CD8-positive, alpha-beta memory T cell (primary cell): ENCODE measurements at regions of chr3 and their contacts with region 1.

Region 1: DNA sequence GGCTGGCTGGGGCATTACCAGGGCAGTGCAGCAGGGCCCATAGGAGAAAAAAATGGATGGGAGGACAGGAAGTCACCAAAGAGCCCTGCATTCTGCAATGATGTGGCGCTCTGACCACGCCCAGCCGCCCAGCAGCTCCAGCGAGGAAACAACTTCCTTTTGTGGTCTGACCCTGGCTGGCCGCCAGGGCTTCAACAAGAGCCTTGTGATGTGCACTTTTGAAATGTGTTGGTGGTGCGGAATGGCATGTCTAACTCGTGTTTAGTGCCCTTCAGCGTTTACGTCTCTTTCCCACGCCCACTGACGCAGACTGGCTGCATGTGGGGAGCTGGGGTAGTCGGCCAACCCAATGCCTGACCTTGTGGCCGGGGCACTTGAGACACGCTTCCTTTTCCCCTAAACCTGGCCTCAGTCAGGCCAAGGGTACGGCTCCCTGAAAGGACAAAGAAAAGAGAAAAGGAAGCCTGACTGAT is 81.9 kb upstream of the CTNNB1 start:
- DNase-seq: peak; percentile 62 to 91 (median 84)
- H3K4me3 ChIP-seq: peak overlapping the region; percentile 48
- H3K4me3 Mint-ChIP-seq: peak overlapping the region; percentile 35 to 76 (median 70)
- H3K27ac ChIP-seq: peak overlapping the region; percentile 40
- H3K27ac Mint-ChIP-seq: peak overlapping the region; percentile 74 to 97 (median 92)
- H3K4me1 ChIP-seq: peaks cover 24% of the 10 kb centered on the region
- H3K4me1 Mint-ChIP-seq: peaks cover 25 to 30% (median 29%) of the 10 kb centered on the region in 3 donors
- H3K27me3 ChIP-seq: no peaks in the 10 kb centered on the region
- H3K27me3 Mint-ChIP-seq: peaks cover 0 to 3% of the 10 kb centered on the region in 2 donors

Region 2: DNA sequence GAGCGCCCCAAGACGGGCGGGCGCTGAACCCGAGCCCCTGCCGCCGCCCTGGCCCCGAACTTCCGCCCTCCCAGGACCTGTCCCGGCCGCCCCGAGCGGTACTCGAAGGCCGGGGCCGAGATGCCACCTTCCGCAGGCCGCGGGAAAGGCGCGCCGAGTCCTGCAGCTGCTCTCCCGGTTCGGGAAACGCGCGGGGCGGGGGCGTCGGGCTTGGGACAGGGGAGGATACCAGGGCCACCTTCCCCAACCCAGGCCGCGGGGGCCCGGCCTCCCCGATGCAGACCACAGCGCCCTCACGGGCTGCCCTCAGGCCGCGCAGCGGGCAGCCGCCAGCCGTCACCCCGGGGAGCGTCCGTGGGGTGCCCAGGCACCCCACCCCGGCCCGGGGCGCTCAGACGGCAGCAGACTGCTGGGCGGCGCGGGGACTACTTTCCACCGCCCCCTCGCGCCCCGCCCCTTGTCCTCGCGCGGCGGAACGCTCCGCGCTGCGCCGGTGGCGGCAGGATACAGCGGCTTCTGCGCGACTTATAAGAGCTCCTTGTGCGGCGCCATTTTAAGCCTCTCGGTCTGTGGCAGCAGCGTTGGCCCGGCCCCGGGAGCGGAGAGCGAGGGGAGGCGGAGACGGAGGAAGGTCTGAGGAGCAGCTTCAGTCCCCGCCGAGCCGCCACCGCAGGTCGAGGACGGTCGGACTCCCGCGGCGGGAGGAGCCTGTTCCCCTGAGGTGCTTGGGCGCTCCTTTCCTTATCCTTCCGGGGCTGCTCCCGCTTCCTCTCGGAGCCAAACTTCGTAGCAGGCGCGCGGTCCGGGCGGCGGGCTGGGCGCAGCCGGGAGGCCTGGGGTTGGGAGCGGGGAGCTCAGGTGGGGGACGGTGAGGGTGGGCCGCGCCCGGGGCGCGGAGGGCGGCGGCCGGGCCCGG is 81.8 kb after region 1 on chr3 and contains the start of gene CTNNB1:
- CTCF ChIA-PET with region 1: no interaction called
- POLR2A ChIA-PET with region 1: interaction called, 12 read pairs
- DNase-seq: peak; percentile 86 to 94 (median 89)
- H3K4me3 ChIP-seq: peak within 1 kb of the TSS; percentile 76
- H3K4me3 Mint-ChIP-seq: peak within 1 kb of the TSS; percentile 93 to 99 (median 96)
- H3K27ac ChIP-seq: peak within 1 kb of the TSS; percentile 84
- H3K27ac Mint-ChIP-seq: peak within 1 kb of the TSS; percentile 86 to 99 (median 96)
- H3K4me1 ChIP-seq: peaks cover 34% of the 10 kb centered on the region
- H3K4me1 Mint-ChIP-seq: peaks cover 40 to 43% (median 42%) of the 10 kb centered on the region in 3 donors
- H3K27me3 ChIP-seq: no peaks in the 10 kb centered on the region
- H3K27me3 Mint-ChIP-seq: peaks cover 1 to 7% of the 10 kb centered on the region in 2 donors
- total RNA-seq, gene CTNNB1: 156 to 166 TPM